Transverse colon (tissue), 4 donors: ENCODE measurements at regions of chr3 and their contacts with region 1.

Region 1: DNA sequence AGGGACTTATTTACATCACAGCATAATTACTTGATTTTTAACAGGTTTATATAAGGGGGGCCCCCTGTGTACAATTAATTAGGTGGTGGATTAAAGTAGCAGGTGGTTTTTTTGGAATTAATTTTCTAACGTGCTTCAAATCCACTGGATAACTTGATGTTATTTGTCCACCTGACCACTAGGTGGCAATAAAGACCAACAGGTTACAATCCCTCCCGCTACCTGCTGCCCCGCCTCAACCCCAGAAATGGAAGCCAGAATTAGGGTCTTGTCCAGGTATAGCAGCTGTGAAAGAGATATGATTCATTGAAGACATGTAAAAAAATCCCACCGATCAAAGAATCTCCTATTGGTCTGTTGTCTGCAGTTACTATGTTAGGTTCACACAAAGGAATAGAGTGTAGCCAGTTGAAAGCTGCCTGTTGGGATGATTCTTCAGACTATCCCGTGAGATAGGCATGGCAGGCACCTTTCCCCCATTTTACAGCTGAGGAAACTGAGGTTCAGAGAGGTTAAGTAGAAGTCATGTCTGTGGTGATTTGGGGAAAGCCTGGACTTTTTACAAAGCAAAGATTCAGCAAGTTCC is 44.0 kb downstream of the MFSD1 start:
- DNase-seq: no peak
- H3K4me3 ChIP-seq: no peak overlapping the region
- H3K27ac ChIP-seq: no peak overlapping the region
- H3K4me1 ChIP-seq: no peaks in the 10 kb centered on the region
- H3K27me3 ChIP-seq: no peaks in the 10 kb centered on the region
- CTCF ChIP-seq: peak; percentile 65 to 74 (median 68)
- EP300 ChIP-seq: no peak
- POLR2A ChIP-seq: no peak

Region 2: DNA sequence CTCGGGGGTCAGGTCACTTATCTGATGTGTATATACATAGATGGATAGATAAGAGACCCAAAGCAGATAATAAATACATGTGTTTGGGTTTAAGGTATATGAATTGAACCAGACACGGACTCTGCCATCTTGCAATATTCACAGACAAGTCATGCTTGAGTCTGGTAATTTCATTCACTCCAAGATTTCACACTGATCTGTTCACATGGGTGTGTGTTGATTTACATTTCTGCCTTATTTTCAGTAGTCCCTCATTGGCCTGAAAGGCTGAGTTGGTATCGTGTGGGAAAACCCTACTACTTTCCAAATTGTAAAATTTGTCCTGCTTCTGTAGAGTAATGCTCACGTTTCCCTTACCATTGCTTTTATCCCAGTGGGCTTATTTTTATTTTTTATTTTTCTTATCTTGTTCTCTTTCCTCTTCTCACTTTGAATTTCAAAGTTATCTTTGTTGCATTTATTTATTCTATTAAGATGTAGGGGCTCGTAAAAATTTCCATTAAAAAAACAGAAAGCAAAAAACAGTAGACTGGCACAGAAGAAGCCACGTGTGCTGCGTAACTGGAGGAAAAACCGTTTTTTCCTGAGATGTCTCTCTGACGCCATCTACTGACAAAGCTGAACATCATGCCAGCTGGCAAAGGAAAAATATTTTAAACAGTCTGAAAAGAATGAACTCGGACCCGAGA is 54.8 kb before region 1 on chr3:
- in situ Hi-C with region 1: no loop called
- intact Hi-C with region 1: no loop called
- DNase-seq: no peak
- H3K4me3 ChIP-seq: no peak overlapping the region
- H3K27ac ChIP-seq: no peak overlapping the region
- H3K4me1 ChIP-seq: peaks cover 0 to 11% (median 4%) of the 10 kb centered on the region in 4 donors
- H3K27me3 ChIP-seq: no peaks in the 10 kb centered on the region
- CTCF ChIP-seq: peak; percentile 74 to 88 (median 82)
- EP300 ChIP-seq: no peak
- POLR2A ChIP-seq: no peak

Region 3: DNA sequence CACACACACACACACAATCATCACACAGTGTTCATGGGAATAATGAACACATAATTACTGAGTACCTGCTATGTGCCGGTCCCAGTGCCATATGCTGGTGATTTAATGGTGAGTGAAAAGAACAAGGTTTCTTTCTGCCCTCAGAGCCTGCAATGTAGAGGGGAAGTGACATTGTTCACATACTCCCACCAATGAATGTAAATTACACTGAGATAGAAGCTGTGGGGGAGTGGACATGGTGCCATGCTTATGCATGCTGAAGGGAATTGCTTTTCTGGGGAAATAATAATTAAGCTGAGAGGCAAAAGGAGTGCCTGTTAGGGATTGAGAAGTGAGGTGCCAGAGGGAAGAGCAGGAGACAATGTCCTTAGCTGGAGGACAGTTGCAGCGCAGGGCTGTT is 131.1 kb after region 1 on chr3:
- in situ Hi-C with region 1: no loop called
- intact Hi-C with region 1: no loop called
- DNase-seq: no peak
- H3K4me3 ChIP-seq: no peak overlapping the region
- H3K27ac ChIP-seq: no peak overlapping the region
- H3K4me1 ChIP-seq: no peaks in the 10 kb centered on the region
- H3K27me3 ChIP-seq: no peaks in the 10 kb centered on the region
- CTCF ChIP-seq: no peak
- EP300 ChIP-seq: no peak
- POLR2A ChIP-seq: no peak

Region 4: DNA sequence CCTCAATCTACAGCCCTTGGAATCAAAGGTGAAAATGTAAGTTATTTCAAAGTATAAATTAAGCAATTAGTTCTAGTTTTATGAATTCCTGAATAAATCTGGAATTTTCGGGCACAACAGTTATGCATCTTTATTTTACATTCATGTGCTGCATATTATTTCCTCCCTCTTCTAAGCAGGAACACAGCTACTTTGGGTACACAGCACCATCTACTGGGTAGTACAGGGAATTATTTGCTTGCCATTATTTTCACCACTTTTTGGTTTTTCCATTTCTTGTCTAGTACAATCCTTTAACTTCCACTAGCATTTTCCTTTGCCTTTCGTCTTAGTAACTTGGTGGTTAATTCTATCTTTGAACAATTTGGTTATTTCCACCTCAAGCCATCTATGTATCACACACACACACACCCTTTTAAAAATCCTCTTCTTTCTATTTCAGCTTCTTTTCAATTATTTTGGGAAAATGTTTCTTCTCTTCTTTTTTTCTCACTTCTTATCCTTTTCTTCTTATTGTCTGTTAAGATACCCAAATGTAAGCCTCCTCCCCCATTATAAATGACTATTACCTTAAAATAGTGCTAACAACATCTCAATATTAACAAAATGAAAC is 407.0 kb after region 1 on chr3:
- in situ Hi-C with region 1: loop called in 3 of 4 experiments (anchors 5 to 25 kb)
- intact Hi-C with region 1: loop called (anchors 2 kb)
- DNase-seq: no peak
- H3K4me3 ChIP-seq: no peak overlapping the region
- H3K27ac ChIP-seq: no peak overlapping the region
- H3K4me1 ChIP-seq: no peaks in the 10 kb centered on the region
- H3K27me3 ChIP-seq: no peaks in the 10 kb centered on the region
- CTCF ChIP-seq: peak; percentile 41 to 72 (median 59)
- EP300 ChIP-seq: no peak
- POLR2A ChIP-seq: no peak

Region 5: DNA sequence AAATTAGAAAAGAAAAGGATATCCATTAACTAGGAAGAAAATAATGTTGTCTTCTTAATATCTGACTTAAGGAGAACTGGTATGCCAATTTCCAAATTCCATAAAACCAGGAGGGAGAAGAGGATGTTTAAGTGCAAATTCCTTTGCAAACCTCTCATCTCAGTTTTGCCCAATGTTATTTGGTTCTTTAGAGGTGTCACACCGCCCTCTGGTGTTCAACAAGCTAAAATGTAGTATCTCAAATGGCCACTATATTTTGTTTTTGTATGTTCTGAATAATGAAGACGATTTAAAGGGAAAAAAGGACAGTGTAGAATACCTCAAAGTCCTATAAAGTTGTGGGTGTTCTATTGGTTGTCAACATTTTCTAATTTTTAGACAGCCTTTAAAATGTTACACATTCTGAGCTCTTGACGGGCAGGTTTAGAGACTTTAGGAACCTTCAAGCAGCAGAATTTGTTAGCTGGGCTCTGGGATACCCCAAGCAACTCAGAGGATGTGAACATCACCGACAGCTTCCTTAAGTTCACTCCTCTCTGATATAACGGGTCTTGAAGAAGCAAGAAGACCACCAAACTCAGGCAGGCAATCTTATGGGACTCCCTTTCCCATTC is 414.3 kb after region 1 on chr3:
- in situ Hi-C with region 1: loop called (anchors 5 to 25 kb)
- intact Hi-C with region 1: loop called (anchors 2 kb)
- DNase-seq: peak; percentile 25
- H3K4me3 ChIP-seq: no peak overlapping the region
- H3K27ac ChIP-seq: no peak overlapping the region
- H3K4me1 ChIP-seq: no peaks in the 10 kb centered on the region
- H3K27me3 ChIP-seq: no peaks in the 10 kb centered on the region
- CTCF ChIP-seq: peak; percentile 66 to 76 (median 70)
- EP300 ChIP-seq: no peak
- POLR2A ChIP-seq: no peak